ENCODE measurements at regions of chr4 and their contacts with region 1.

Region 1: DNA sequence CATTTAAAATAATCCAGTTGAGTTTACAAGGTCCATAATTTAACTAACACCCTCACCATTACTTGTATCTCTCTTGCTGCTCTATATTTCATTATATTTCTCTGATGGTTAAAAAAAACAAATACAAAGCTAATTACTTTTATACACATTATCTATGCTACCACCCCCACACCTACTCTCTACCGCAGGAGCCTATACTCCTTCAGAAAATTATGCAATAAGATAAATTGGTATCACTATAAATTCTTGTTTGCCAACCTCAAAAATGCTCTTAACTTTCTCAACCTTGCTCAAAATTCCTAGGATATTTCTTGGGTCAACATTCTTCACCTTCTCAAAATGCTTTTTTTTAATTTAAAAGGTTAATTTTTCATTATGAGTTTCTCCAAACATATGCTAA is 282.7 kb downstream of the KCTD8 start:
- DNase-seq: no peak
- ATAC-seq: no peak
- H3K4me3 ChIP-seq: no peak overlapping the region
- H3K27ac ChIP-seq: no peak overlapping the region
- H3K4me1 ChIP-seq: no peaks in the 10 kb centered on the region
- H3K27me3 ChIP-seq: no peaks in the 10 kb centered on the region
- CTCF ChIP-seq: no peak

Region 2: DNA sequence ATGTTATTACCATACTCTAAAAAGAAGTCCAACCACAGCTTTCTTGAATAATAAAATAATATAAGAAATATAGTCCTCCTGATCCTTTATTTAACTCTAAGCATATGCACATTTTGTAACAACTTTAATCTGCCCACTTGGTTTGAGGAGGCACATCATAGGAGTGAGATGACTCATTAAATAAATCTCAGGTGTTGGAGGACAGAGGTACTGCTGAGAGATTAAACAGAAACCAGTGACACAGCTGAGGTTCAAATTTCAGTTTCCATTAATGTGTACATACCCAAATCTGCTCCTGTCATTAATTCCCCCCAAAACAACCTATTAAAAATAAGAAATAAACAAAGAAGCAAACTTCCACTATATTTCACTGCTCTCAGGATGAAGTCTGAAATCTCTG is 71.7 kb after region 1 on chr4:
- CTCF ChIA-PET with region 1: no interaction called
- POLR2A ChIA-PET with region 1: no interaction called
- in situ Hi-C with region 1: no loop called
- intact Hi-C with region 1: loop called (anchors 10 kb)
- DNase-seq: no peak
- ATAC-seq: no peak
- H3K4me3 ChIP-seq: no peak overlapping the region
- H3K27ac ChIP-seq: no peak overlapping the region
- H3K4me1 ChIP-seq: no peaks in the 10 kb centered on the region
- H3K27me3 ChIP-seq: no peaks in the 10 kb centered on the region
- CTCF ChIP-seq: no peak